ENCODE measurements at regions of chr6 and their contacts with region 1.

Region 1: DNA sequence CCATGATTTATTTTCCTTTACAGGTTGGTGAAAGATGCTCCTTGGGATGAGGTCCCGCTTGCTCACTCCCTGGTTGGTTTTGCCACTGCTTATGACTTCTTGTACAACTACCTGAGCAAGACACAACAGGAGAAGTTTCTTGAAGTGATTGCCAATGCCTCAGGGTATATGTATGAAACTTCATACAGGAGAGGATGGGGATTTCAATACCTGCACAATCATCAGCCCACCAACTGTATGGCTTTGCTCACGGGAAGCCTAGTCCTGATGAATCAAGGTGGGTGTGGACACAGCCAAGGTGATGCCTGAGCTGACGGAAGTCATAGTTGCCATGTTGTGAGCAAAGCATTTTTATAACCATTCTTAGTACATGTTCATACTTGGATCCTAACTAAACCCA is 34.6 kb upstream of the CALHM6 start:
- DNase-seq: peak; percentile 92
- H3K4me3 ChIP-seq: no peak overlapping the region
- H3K27ac ChIP-seq: peak overlapping the region; percentile 85
- H3K4me1 ChIP-seq: peaks cover 14% of the 10 kb centered on the region
- H3K27me3 ChIP-seq: no peaks in the 10 kb centered on the region
- CTCF ChIP-seq: no peak

Region 2: GRCh38 chr6:116206231-116206903 is 220.2 kb before region 1 on chr6:
- CTCF ChIA-PET with region 1: no interaction called
- dilution Hi-C with region 1: no loop called
- in situ Hi-C with region 1: no loop called
- intact Hi-C with region 1: no loop called
- DNase-seq: peak; percentile 80
- H3K4me3 ChIP-seq: no peak overlapping the region
- H3K27ac ChIP-seq: no peak overlapping the region
- H3K4me1 ChIP-seq: peaks cover 32% of the 10 kb centered on the region
- H3K27me3 ChIP-seq: no peaks in the 10 kb centered on the region
- CTCF ChIP-seq: no peak

Region 3: GRCh38 chr6:116387374-116387773 is 39.2 kb before region 1 on chr6:
- CTCF ChIA-PET with region 1: no interaction called
- dilution Hi-C with region 1: no loop called
- in situ Hi-C with region 1: no loop called
- intact Hi-C with region 1: loop called (anchors 1 kb)
- DNase-seq: peak; percentile 96
- H3K4me3 ChIP-seq: peak overlapping the region in 1 of 3 experiments; percentile 35
- H3K27ac ChIP-seq: peak overlapping the region; percentile 100
- H3K4me1 ChIP-seq: peaks cover 66% of the 10 kb centered on the region
- H3K27me3 ChIP-seq: no peaks in the 10 kb centered on the region
- CTCF ChIP-seq: no peak

Measured in mammary epithelial cell (primary cell).